Mammary epithelial cell (primary cell): ENCODE measurements at regions of chr11 and their contacts with region 1.

Region 1: GRCh38 chr11:114340311-114341131 is 44.3 kb downstream of the NNMT start:
- DNase-seq: peak; percentile 57
- H3K4me3 ChIP-seq: peak overlapping the region in 2 of 3 experiments; percentile 9 to 17
- H3K27ac ChIP-seq: no peak overlapping the region
- H3K4me1 ChIP-seq: peaks cover 4% of the 10 kb centered on the region
- H3K27me3 ChIP-seq: no peaks in the 10 kb centered on the region
- CTCF ChIP-seq: peak; percentile 75 to 84

Region 2: GRCh38 chr11:114295676-114296604 is 44.6 kb before region 1 on chr11 and contains the start of gene NNMT:
- CTCF ChIA-PET with region 1: no interaction called
- dilution Hi-C with region 1: no loop called
- in situ Hi-C with region 1: no loop called
- intact Hi-C with region 1: loop called (anchors 5 kb)
- DNase-seq: peak; percentile 89
- H3K4me3 ChIP-seq: peak within 1 kb of the TSS; percentile 48 to 93 (median 73)
- H3K27ac ChIP-seq: peak within 1 kb of the TSS; percentile 98
- H3K4me1 ChIP-seq: peaks cover 51% of the 10 kb centered on the region
- H3K27me3 ChIP-seq: no peaks in the 10 kb centered on the region
- CTCF ChIP-seq: peak in 1 of 2 donors; percentile 10
- total RNA-seq, gene NNMT: 131 to 605 TPM

Region 3: GRCh38 chr11:114606003-114606801 is 265.7 kb after region 1 on chr11:
- CTCF ChIA-PET with region 1: no interaction called
- dilution Hi-C with region 1: no loop called
- in situ Hi-C with region 1: no loop called
- intact Hi-C with region 1: loop called (anchors 2 kb)
- DNase-seq: no peak
- H3K4me3 ChIP-seq: no peak overlapping the region
- H3K27ac ChIP-seq: no peak overlapping the region
- H3K4me1 ChIP-seq: no peaks in the 10 kb centered on the region
- H3K27me3 ChIP-seq: no peaks in the 10 kb centered on the region
- CTCF ChIP-seq: peak in 1 of 2 donors; percentile 5

Region 4: DNA sequence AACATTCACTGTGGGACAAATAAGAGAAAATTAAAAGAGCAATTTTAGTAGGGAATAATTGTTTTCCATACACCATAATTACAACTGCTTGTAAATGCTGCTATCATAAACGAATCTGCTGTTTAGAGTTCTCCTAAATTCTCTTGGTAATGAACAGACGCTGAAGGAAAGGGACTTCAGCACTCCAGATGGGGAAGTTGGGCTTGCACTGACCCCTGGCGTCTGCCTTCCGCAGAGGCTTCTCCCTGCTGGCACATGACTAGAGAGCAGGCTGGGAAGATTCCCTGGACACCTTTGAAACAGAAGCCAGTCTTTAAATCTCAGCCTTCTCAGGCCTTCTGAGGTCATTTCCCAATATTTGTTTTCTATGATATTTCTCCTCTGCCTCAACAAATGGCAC is 421.9 kb after region 1 on chr11:
- CTCF ChIA-PET with region 1: no interaction called
- dilution Hi-C with region 1: no loop called
- in situ Hi-C with region 1: loop called in 1 of 2 experiments (anchors 25 kb)
- intact Hi-C with region 1: loop called (anchors 1 kb)
- DNase-seq: peak; percentile 20
- H3K4me3 ChIP-seq: no peak overlapping the region
- H3K27ac ChIP-seq: no peak overlapping the region
- H3K4me1 ChIP-seq: no peaks in the 10 kb centered on the region
- H3K27me3 ChIP-seq: no peaks in the 10 kb centered on the region
- CTCF ChIP-seq: peak; percentile 44 to 68

Region 5: GRCh38 chr11:114774599-114775361 is 434.3 kb after region 1 on chr11:
- CTCF ChIA-PET with region 1: no interaction called
- dilution Hi-C with region 1: no loop called
- in situ Hi-C with region 1: loop called in 1 of 2 experiments (anchors 25 kb)
- intact Hi-C with region 1: no loop called
- DNase-seq: peak; percentile 16
- H3K4me3 ChIP-seq: no peak overlapping the region
- H3K27ac ChIP-seq: no peak overlapping the region
- H3K4me1 ChIP-seq: no peaks in the 10 kb centered on the region
- H3K27me3 ChIP-seq: no peaks in the 10 kb centered on the region
- CTCF ChIP-seq: peak; percentile 70 to 72

Region 6: GRCh38 chr11:115193914-115194801 is 853.6 kb after region 1 on chr11:
- CTCF ChIA-PET with region 1: no interaction called
- dilution Hi-C with region 1: no loop called
- in situ Hi-C with region 1: no loop called
- intact Hi-C with region 1: no loop called
- DNase-seq: no peak
- H3K4me3 ChIP-seq: no peak overlapping the region
- H3K27ac ChIP-seq: no peak overlapping the region
- H3K4me1 ChIP-seq: no peaks in the 10 kb centered on the region
- H3K27me3 ChIP-seq: no peaks in the 10 kb centered on the region
- CTCF ChIP-seq: no peak

Region 7: DNA sequence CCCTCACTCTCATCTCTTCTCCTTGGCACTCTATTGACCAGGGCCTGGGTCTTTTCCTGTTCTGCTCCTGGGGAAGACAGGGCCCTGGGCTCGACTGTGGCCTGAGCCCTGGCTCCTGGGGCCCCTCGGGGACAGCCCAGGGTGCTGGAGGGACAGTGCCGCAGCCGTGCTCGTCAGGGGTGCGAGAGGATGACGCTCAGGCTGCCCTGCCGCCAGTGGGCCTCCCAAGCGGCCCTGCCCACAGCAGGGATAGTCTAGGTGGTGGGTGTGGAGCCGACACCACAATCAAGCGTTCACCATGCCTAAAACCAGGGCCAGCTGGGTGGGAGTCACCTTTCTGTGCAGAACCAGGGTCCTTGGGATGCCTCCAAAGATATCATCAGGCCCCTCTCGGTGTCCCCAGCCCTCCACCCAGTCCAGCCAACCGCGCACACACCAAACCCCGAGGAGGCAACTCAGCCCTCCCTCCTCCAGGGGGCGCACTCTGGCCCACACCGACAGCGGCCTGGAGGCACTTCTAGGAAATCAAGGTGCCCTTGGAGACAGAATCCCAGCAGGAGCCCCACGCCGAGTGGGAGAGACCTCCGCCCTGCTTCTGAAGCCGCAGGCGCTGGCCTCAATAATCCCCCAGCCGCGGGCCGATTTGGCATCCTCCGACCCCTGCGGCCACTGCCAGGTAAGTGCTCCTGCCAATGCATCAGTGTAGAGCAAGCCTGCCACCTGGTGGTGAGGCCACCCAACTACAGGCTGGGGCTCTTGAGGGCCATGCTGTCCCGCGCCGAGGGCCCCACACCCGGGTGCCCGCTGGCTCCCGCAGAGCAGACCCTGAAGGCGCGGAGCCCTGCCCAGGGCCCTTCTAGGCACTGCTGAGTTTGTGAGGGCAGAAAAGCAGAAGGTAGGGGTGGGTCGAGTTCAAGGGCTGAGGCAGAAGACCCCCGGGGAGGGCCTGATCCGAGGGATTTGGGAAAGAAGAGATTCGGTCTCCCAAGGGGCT is 1935.8 kb after region 1 on chr11:
- CTCF ChIA-PET with region 1: no interaction called
- dilution Hi-C with region 1: no loop called
- in situ Hi-C with region 1: no loop called
- intact Hi-C with region 1: loop called (anchors 10 kb)
- DNase-seq: peak; percentile 17
- H3K4me3 ChIP-seq: peak overlapping the region in 2 of 3 experiments; percentile 20 to 35
- H3K27ac ChIP-seq: no peak overlapping the region
- H3K4me1 ChIP-seq: no peaks in the 10 kb centered on the region
- H3K27me3 ChIP-seq: no peaks in the 10 kb centered on the region
- CTCF ChIP-seq: peak; percentile 70 to 84